ENCODE measurements at regions of chr6 and their contacts with region 1.

Region 1: GRCh38 chr6:28863604-28864320 is 60.0 kb downstream of the TRIM27 start:
- DNase-seq: peak; percentile 77
- ATAC-seq: peak; percentile 85

Region 2: GRCh38 chr6:28657769-28658465 is 205.8 kb before region 1 on chr6:
- intact Hi-C with region 1: no loop called
- DNase-seq: peak; percentile 51
- ATAC-seq: peak; percentile 86

Region 3: GRCh38 chr6:28758046-28758817 is 105.5 kb before region 1 on chr6:
- intact Hi-C with region 1: no loop called
- DNase-seq: no peak
- ATAC-seq: no peak

Region 4: GRCh38 chr6:28838634-28839442 is 24.9 kb before region 1 on chr6:
- intact Hi-C with region 1: loop called (anchors 1 kb)
- DNase-seq: peak; percentile 87
- ATAC-seq: peak; percentile 93